Activated T-helper 1 cell treated with anti-CD3 and anti-CD28 coated beads, Interleukin-12 subunit alpha, Interleukin-12 subunit beta, Interleukin-2, Interleukin-4 antibody, amounts not matched to agents 30 ng/mL and 10 ng/mL and 1 ng/mL, durations not matched to agents 14 hours and 24 hours and 36 hours (primary cell): ENCODE measurements at regions of chr18 and their contacts with region 1.

Region 1: DNA sequence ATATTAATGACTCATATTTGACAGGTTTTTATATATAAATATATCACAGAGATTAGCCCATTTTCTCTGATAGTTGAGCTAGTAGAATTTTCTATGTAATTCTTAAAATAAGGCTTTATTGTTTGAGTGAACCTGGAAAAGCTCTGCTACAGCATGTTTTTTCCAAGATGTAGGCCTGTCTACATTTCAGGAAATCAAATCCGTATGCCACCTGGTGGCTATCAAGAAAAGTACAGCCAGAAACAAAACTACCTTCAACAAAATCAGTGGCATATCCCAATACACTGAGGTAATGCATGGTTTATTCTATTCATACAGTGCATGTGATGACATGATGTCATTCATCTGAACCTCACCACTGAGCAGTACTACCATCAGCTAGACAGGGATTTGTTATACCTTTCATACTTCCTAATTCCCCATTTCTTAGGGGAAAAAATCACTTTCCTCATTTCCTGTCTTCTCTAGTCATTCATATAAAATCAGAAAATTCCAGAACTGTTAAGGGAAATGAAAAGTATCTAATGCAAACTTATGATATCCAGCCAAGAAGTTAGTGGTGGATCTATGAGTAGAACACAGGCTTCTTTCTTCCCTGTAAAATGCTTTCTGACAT is 310.4 kb upstream of the SYT4 start:
- DNase-seq: no peak
- H3K4me3 Mint-ChIP-seq: no peak overlapping the region
- H3K27ac Mint-ChIP-seq: no peak overlapping the region
- H3K4me1 Mint-ChIP-seq: no peaks in the 10 kb centered on the region
- H3K27me3 Mint-ChIP-seq: no peaks in the 10 kb centered on the region

Region 2: DNA sequence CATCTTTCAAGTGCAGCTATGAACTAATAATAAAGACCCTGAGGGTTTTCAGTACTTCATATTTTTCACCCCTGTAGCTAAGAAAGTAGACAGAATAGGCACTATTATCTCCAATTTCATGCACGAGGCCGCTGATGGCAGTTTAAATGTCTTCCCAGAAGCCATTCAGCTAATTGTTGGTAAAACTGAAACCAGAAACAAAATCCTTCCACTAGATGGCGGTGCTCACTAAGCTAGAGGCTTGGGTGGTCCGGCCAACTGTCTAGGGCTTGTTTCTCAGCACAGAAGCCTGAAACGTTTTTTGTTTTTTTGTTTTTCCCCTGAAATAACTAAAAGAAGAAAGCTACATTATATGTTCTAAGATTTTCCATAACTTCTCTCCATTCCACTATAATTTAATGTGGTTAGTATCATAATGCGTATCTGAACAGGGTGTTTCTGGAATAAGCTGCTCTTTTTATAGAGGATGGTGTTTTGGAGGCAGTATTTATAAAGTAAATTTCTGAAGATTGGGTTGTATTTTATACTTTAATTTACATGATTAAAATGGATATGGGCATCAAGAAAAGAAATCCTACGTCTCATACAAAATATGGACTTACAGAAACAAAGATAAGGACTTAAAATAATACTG is 1473.2 kb before region 1 on chr18:
- intact Hi-C with region 1: loop called (anchors 5 kb)
- DNase-seq: peak; percentile 38
- H3K4me3 Mint-ChIP-seq: no peak overlapping the region
- H3K27ac Mint-ChIP-seq: peak overlapping the region; percentile 49
- H3K4me1 Mint-ChIP-seq: peaks cover 15% of the 10 kb centered on the region
- H3K27me3 Mint-ChIP-seq: peaks cover 9% of the 10 kb centered on the region

Region 3: DNA sequence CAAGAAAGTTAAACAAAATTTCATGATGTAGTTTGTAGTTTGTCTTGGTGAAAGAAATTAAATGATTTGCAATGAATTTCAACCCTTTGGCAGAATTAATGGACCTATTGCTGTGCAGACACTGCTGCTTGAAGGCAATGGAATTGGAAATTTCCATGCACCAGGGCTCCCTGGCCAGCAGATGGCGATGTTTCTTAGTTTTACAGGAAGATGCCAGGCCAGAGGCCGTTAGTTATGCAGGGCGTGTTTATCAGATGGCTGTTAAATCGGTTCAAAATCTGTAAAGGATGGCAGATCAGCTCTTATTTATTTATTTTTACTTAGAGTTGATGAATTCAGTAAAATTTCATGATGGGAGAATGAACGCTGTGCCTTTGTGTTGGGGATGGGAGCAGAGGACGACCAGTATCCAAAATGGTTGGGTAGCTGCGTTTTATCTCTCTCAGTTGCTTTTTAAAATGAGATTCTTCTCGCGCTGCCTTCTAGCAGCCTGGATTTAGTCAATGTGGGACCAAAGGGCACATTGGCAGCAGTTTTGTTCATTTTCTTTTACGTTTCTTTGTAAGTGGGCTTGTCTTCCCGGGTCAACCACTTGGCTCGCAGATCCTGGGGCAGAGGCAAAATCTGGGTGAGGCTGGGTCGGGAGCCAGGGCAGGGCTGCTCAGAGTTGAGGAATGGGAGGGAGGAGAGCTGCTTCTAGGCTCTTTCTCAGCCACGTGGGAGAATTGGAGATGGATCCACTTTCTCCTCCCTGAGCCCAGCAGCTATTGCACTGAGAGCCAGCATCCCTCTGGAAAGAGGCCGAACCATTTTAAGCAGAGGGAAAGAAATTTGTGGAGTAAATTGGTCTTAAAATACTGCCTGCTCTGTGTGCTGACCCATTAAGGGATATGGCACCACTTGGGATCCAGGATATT is 1288.6 kb before region 1 on chr18:
- intact Hi-C with region 1: loop called (anchors 5 kb)
- DNase-seq: peak; percentile 13
- H3K4me3 Mint-ChIP-seq: no peak overlapping the region
- H3K27ac Mint-ChIP-seq: no peak overlapping the region
- H3K4me1 Mint-ChIP-seq: no peaks in the 10 kb centered on the region
- H3K27me3 Mint-ChIP-seq: no peaks in the 10 kb centered on the region

Region 4: DNA sequence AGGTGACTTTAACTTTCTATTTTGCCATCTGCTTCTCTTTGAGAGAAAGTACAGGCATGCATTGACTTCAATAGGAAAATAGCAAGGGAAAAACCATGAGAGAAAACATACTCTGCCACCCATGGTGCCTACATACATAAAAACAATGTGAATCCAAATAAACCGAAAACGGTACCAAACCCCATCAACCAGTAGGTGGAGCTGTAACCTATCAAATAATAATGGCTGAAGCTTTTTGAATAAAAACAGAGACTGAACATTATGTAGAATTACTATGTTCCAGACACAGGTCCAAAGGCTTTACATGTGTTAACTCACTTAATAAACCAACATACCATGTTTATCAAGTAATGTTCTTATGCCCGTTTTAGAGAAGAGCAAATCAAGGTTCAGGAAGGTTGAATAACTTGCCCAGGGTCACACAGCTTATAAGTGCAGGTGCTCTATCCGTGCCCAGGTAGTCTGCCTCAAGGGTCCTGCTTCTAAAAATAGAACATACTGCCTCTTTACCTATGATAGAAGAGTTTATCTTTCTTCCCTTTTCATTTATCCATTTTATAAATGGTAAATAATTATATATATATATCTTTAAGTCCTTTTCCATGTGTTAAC is 16.5 kb before region 1 on chr18:
- intact Hi-C with region 1: loop called (anchors 1 kb)
- DNase-seq: no peak
- H3K4me3 Mint-ChIP-seq: no peak overlapping the region
- H3K27ac Mint-ChIP-seq: no peak overlapping the region
- H3K4me1 Mint-ChIP-seq: no peaks in the 10 kb centered on the region
- H3K27me3 Mint-ChIP-seq: peaks cover 3% of the 10 kb centered on the region

Region 5: GRCh38 chr18:43744960-43745740 is 157.5 kb after region 1 on chr18:
- intact Hi-C with region 1: no loop called
- DNase-seq: no peak
- H3K4me3 Mint-ChIP-seq: no peak overlapping the region
- H3K27ac Mint-ChIP-seq: no peak overlapping the region
- H3K4me1 Mint-ChIP-seq: no peaks in the 10 kb centered on the region
- H3K27me3 Mint-ChIP-seq: no peaks in the 10 kb centered on the region